ENCODE measurements at regions of chr7 and their contacts with region 1.

Region 1: DNA sequence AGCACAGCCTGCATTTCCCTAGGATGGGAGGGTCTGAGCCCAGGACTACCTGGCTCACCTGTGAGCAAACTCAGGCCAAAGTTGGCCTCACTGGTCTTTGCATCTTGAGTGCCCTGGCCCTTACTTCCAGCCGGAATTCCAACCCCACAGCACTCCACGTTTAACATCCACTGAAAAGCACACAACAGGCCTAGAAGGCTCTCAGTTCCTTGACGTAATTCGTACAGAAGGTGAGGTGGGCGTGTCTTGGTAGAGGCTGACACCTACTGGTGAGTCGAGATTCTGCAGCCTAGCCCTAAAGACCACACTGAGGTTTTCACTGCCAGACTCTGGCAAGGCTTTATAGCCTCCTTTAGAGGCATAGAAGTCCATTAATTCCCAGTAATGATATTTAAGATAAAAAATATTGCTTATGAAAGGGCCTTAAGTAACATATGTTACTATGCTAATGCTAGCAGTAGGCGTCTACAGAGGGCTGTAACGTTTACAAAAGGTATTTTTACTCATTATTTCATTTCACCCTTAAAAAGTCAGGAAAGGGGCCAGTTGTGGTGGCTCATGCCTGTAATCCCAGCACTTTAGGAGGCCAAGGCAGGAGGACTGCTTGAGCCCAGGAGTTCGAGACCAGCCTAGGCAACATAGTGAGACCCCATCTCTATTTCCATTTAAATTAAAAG is 95.8 kb downstream of the HIP1 start:
- DNase-seq: peak; percentile 67 to 68
- H3K4me3 ChIP-seq: no peak overlapping the region
- H3K4me3 Mint-ChIP-seq: no peak overlapping the region
- H3K27ac Mint-ChIP-seq: no peak overlapping the region
- H3K4me1 ChIP-seq: no peaks in the 10 kb centered on the region; the same call in 1 of the 2 replicates
- H3K4me1 Mint-ChIP-seq: peaks cover 12% of the 10 kb centered on the region
- H3K27me3 ChIP-seq: no peaks in the 10 kb centered on the region
- H3K27me3 Mint-ChIP-seq: no peaks in the 10 kb centered on the region
- CTCF ChIP-seq: peak; percentile 47 to 77

Region 2: DNA sequence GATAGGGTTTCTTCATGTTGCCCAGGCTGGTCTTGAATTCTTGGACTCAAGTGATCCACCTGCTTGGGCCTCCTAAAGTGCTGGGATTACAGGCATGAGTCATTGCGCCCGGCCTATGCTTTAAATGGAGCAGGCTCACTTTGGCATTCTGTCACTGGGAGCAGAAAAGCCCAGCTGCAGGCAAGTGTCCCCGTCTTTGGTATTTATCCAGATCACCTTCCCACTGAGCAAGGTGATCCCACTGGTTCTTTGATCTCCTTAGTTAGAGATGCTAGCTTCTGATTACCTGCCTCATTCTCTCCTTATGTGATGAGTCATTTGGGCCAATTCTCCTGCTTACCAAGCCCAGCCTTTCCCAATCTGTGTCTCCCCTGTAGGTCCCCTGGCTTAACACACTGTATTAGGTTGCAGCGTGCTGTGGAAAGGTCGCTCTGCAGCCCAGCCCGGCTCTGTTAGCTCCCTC is 111.6 kb before region 1 on chr7:
- CTCF ChIA-PET with region 1: interaction called, 3 read pairs
- POLR2A ChIA-PET with region 1: no interaction called
- intact Hi-C with region 1: loop called (anchors 5 kb)
- DNase-seq: peak; percentile 31 to 63
- H3K4me3 ChIP-seq: no peak overlapping the region
- H3K4me3 Mint-ChIP-seq: no peak overlapping the region
- H3K27ac Mint-ChIP-seq: peak overlapping the region; percentile 40
- H3K4me1 ChIP-seq: no peaks in the 10 kb centered on the region
- H3K4me1 Mint-ChIP-seq: peaks cover 7% of the 10 kb centered on the region
- H3K27me3 ChIP-seq: no peaks in the 10 kb centered on the region
- H3K27me3 Mint-ChIP-seq: no peaks in the 10 kb centered on the region
- CTCF ChIP-seq: no peak

Region 3: GRCh38 chr7:75617634-75618234 is 25.2 kb before region 1 on chr7:
- CTCF ChIA-PET with region 1: no interaction called
- POLR2A ChIA-PET with region 1: no interaction called
- intact Hi-C with region 1: no loop called
- DNase-seq: no peak
- H3K4me3 ChIP-seq: no peak overlapping the region
- H3K4me3 Mint-ChIP-seq: no peak overlapping the region
- H3K27ac Mint-ChIP-seq: no peak overlapping the region
- H3K4me1 ChIP-seq: no peaks in the 10 kb centered on the region
- H3K4me1 Mint-ChIP-seq: no peaks in the 10 kb centered on the region
- H3K27me3 ChIP-seq: no peaks in the 10 kb centered on the region
- H3K27me3 Mint-ChIP-seq: no peaks in the 10 kb centered on the region
- CTCF ChIP-seq: no peak

Region 4: DNA sequence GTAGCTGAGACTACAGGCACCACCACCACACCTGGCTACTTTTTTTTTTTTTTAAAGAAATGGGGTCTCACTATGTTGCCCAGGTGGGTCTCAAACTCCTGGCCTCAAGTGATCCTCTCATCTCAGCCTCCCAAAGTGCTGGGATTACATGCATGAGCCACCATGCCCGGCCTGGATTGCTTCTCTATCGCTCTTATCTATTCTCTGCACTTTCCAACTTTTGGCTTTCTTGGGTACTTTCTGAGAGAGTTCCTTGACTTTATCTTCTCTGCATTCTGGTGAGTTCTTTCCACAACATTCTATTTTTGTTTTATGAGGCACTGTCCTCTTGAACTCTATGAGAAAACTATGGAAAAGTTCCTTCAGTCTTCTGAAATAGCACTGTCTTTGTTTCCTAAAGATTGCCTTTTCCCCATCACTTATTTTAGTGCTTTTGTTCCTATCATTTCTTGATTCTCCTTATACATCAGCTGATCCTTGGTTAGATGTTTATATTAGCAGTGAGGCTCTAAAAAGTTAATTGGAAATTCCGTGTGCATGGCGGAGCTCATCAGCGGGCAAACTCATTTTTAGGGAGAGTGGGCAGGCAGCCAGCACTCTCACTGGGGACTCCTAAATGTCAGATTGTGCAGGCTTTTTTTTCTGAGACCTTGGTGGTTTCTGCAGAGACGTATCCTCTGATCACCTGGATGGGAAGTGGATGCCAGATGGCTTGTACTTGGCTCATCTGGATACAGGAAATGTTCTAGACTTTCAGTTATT is 51.9 kb after region 1 on chr7:
- CTCF ChIA-PET with region 1: no interaction called
- POLR2A ChIA-PET with region 1: no interaction called
- intact Hi-C with region 1: no loop called
- DNase-seq: no peak
- H3K4me3 ChIP-seq: no peak overlapping the region
- H3K4me3 Mint-ChIP-seq: no peak overlapping the region
- H3K27ac Mint-ChIP-seq: no peak overlapping the region
- H3K4me1 ChIP-seq: 0 out of 2 replicates have a peak, but pooled peaks cover 6% of the 10 kb centered on the region
- H3K4me1 Mint-ChIP-seq: no peaks in the 10 kb centered on the region
- H3K27me3 ChIP-seq: no peaks in the 10 kb centered on the region
- H3K27me3 Mint-ChIP-seq: peaks cover 9% of the 10 kb centered on the region
- CTCF ChIP-seq: no peak